Heart right ventricle (tissue), 16 donors: ENCODE measurements at regions of chr21 and their contacts with region 1.

Region 1: GRCh38 chr21:41777951-41778874 is 11.4 kb upstream of the RIPK4 start:
- DNase-seq: peak; percentile 84 to 85
- ATAC-seq: peak; percentile 83 to 96 (median 90)
- H3K4me3 ChIP-seq: no peak overlapping the region
- H3K27ac ChIP-seq: no peak overlapping the region
- H3K4me1 ChIP-seq: peaks cover 0 to 10% (median 7%) of the 10 kb centered on the region in 9 donors
- H3K27me3 ChIP-seq: peaks cover 4 to 91% (median 79%) of the 10 kb centered on the region in 7 donors
- CTCF ChIP-seq: peak; percentile 84 to 98 (median 94)

Region 2: DNA sequence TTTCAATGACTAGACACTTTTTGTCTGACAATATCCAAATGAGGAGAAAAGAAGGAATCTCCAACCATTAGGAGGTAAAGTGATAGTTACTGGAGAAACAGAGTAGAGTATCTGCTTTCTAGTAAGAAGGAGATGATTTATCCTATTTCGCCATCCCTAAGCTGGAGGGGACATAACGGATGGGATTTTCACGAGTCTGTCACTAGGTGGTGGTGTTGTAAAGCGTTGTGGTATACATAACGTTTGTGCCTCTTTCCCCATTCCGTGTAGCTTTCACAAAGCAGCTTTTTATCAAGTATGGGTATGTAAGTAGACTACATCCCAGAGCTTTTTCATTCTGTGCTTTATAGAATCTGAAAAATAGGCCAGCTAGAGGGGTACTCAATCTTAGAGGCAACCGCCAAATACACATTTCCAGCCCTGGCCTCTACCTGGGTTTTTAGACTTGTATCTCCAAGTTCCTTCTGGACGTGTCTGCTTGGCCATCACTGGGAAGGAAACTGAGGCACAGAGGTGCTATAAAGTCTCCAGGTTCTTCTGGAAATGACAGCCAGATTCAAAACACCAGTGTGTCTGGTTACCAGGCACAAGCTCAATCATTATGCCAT is 494.9 kb before region 1 on chr21:
- intact Hi-C with region 1: loop called in 6 of 10 experiments (anchors 2 to 10 kb)
- DNase-seq: peak in 1 of 2 donors; percentile 66
- ATAC-seq: peak; percentile 80 to 92 (median 89)
- H3K4me3 ChIP-seq: no peak overlapping the region
- H3K27ac ChIP-seq: no peak overlapping the region
- H3K4me1 ChIP-seq: peaks cover 0 to 11% (median 0%) of the 10 kb centered on the region in 9 donors
- H3K27me3 ChIP-seq: peaks cover 0 to 14% (median 5%) of the 10 kb centered on the region in 7 donors
- CTCF ChIP-seq: peak; percentile 53 to 85 (median 78)

Region 3: DNA sequence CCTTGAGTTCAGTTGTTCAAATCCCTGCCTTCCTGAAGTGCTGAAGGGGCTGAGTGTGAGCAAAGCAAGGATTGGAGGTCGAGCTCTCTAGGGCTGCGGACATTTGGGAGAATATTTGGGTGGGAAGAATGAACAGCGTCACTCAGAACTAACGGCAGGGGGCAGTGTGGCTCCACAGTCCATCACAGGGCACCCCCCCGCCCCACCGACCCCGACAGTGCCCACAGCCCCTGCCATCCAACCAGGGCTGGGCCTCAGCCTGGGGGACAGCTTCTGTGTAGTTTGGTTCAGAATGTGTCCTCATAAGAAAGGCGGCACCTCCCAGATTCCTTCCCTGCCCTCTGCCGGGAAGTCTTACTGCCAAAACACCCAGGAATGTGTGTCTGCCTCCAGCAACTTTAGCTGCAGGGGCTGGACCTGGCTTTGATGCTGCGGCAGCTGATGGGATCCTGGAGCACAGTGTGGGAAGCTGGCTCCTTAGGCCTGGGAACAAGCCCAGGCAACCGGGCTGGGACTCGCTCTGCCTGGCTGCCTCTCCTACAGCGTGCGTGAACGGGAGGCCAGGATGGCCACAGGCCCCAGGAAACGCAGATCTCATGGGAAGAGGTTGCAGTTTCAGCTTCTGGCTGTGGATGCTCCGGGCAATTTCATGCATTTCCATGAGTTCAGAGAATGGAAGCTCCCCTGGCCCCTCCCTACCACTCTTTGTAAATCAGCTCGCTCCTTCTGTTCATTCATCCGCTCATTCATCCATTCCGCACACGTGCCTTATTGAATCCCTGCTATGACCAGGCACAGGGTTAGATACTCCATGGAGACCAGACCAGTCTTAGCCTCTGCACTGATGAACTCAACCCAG is 165.3 kb before region 1 on chr21:
- intact Hi-C with region 1: loop called (anchors 1 to 5 kb)
- DNase-seq: peak; percentile 63 to 70
- ATAC-seq: peak; percentile 84 to 92 (median 88)
- H3K4me3 ChIP-seq: no peak overlapping the region
- H3K27ac ChIP-seq: peak overlapping the region in 5 of 10 donors; percentile 9 to 51 (median 21)
- H3K4me1 ChIP-seq: peaks cover 0 to 35% (median 14%) of the 10 kb centered on the region in 9 donors
- H3K27me3 ChIP-seq: peaks cover 0 to 56% (median 32%) of the 10 kb centered on the region in 7 donors
- CTCF ChIP-seq: peak; percentile 43 to 83 (median 78)

Region 4: GRCh38 chr21:41885341-41886029 is 107.3 kb after region 1 on chr21:
- intact Hi-C with region 1: no loop called
- DNase-seq: no peak
- ATAC-seq: no peak
- H3K4me3 ChIP-seq: no peak overlapping the region
- H3K27ac ChIP-seq: no peak overlapping the region
- H3K4me1 ChIP-seq: no peaks in the 10 kb centered on the region
- H3K27me3 ChIP-seq: no peaks in the 10 kb centered on the region
- CTCF ChIP-seq: no peak